A549 (cell line): ENCODE measurements at regions of chr14 and their contacts with region 1.

Region 1: GRCh38 chr14:102316743-102317563 is 2.6 kb upstream of the ZNF839 start:
- DNase-seq: peak; percentile 86 to 93
- ATAC-seq: peak; percentile 65 to 82
- H3K4me3 ChIP-seq: peak overlapping the region; percentile 51
- H3K27ac ChIP-seq: peak overlapping the region; percentile 79 to 99
- H3K4me1 ChIP-seq: peaks cover 36% of the 10 kb centered on the region
- CTCF ChIP-seq: peak; percentile 68
- EP300 ChIP-seq: no peak; a peak in 1 of 5 replicates
- POLR2A ChIP-seq: no peak; the same call in 1 of the 2 replicates
- RAD21 ChIP-seq: peak in 1 of 2 experiments; percentile 11; a peak in 2 of 5 replicates

Region 2: DNA sequence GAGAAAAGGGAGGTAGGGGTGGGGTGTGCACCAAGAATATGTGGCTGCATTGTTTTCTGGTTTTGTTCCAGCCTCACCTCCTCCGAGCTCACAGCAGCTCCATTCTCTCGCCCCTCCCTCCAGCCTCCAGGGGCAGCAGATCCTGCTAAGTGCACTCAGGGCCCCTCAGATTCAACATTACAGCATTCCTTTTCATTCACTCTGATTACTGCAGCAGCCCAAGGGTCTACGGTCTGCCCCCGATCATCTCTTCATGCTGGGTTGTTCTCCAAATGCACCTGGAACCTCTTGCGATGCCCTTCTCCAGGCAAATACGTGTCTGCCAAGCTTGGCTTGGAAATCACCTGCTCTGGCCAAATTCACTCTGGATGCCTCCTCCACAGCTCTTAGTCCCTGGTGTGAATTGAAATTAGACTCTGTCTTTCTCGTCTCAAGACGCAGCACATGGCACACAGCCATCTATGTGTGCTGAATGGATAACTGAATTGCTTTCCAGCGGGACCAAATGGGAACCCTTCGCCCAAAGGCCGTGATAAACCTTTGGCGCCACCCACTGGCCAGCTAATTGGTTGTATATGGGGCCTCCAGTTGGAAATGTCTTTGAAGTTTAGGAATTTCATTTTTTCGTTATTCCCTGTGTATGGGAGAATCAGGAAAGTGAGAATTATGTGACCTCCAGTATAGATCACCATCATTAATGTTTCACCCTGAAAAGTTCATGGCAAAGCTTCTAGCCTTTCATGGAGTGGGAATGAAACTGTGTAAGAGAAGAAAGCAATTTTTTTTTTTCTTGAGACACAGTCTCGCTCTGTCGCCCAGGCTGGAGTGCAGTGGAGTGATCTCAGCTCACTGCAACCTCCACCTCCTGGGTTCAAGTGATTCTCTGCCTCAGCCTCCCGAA is 220.5 kb before region 1 on chr14:
- CTCF ChIA-PET with region 1: interaction called, 13 read pairs
- POLR2A ChIA-PET with region 1: interaction called, 4 read pairs
- DNase-seq: peak; percentile 70 to 76
- ATAC-seq: peak; percentile 82 to 92
- H3K4me3 ChIP-seq: no peak overlapping the region
- H3K27ac ChIP-seq: 0 out of 6 replicates have a peak overlapping the region, but pooled peaks of 1 of the 2 experiments have one; percentile 8
- H3K4me1 ChIP-seq: peaks cover 18% of the 10 kb centered on the region
- CTCF ChIP-seq: peak; percentile 87
- EP300 ChIP-seq: no peak
- POLR2A ChIP-seq: no peak
- RAD21 ChIP-seq: peak; percentile 89 to 91

Region 3: GRCh38 chr14:102220031-102220430 is 96.9 kb before region 1 on chr14:
- CTCF ChIA-PET with region 1: interaction called, 22 read pairs
- POLR2A ChIA-PET with region 1: no interaction called
- DNase-seq: no peak
- ATAC-seq: no peak
- H3K4me3 ChIP-seq: no peak overlapping the region
- H3K27ac ChIP-seq: no peak overlapping the region
- H3K4me1 ChIP-seq: no peaks in the 10 kb centered on the region
- CTCF ChIP-seq: no peak
- EP300 ChIP-seq: no peak
- POLR2A ChIP-seq: no peak
- RAD21 ChIP-seq: no peak

Region 4: DNA sequence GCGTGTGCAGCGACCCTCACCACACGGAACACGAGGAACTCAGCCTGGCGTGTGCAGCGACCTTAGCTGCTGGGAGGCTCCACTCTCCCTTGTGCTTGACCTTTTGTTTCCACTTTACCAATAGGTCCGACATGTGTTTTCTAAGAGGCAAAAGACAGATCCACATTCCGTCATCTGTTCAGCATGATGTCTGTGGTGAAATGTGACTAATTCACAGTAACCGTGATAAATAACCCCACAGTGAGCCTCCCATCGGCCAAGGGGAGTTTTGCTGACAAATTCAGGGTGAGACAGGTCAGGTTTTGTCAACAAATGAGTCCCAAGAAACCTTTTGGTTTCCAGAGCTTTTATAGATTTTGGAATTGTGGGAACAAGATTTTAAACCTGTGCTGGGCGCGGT is 67.9 kb before region 1 on chr14:
- CTCF ChIA-PET with region 1: interaction called, 31 read pairs
- POLR2A ChIA-PET with region 1: no interaction called
- DNase-seq: no peak
- ATAC-seq: no peak
- H3K4me3 ChIP-seq: no peak overlapping the region
- H3K27ac ChIP-seq: no peak overlapping the region
- H3K4me1 ChIP-seq: no peaks in the 10 kb centered on the region
- CTCF ChIP-seq: no peak
- EP300 ChIP-seq: no peak
- POLR2A ChIP-seq: no peak
- RAD21 ChIP-seq: no peak

Region 5: GRCh38 chr14:102272392-102272791 is 44.6 kb before region 1 on chr14:
- CTCF ChIA-PET with region 1: interaction called, 16 read pairs
- POLR2A ChIA-PET with region 1: interaction called, 4 read pairs
- DNase-seq: no peak
- ATAC-seq: no peak
- H3K4me3 ChIP-seq: no peak overlapping the region
- H3K27ac ChIP-seq: peak overlapping the region in 1 of 2 experiments; percentile 57; a peak in 2 of 6 replicates
- H3K4me1 ChIP-seq: peaks cover 8% of the 10 kb centered on the region; the same call in 2 of the 3 replicates
- CTCF ChIP-seq: no peak
- EP300 ChIP-seq: no peak
- POLR2A ChIP-seq: no peak
- RAD21 ChIP-seq: no peak

Region 6: GRCh38 chr14:102817942-102818940 is 501.3 kb after region 1 on chr14:
- CTCF ChIA-PET with region 1: no interaction called
- POLR2A ChIA-PET with region 1: no interaction called
- DNase-seq: no peak
- ATAC-seq: no peak; a peak in 1 of 6 replicates
- H3K4me3 ChIP-seq: no peak overlapping the region
- H3K27ac ChIP-seq: no peak overlapping the region
- H3K4me1 ChIP-seq: peaks cover 4% of the 10 kb centered on the region; the same call in 2 of the 3 replicates
- CTCF ChIP-seq: no peak
- EP300 ChIP-seq: no peak
- POLR2A ChIP-seq: no peak
- RAD21 ChIP-seq: no peak